ENCODE measurements at regions of chr3 and their contacts with region 1.

Region 1: DNA sequence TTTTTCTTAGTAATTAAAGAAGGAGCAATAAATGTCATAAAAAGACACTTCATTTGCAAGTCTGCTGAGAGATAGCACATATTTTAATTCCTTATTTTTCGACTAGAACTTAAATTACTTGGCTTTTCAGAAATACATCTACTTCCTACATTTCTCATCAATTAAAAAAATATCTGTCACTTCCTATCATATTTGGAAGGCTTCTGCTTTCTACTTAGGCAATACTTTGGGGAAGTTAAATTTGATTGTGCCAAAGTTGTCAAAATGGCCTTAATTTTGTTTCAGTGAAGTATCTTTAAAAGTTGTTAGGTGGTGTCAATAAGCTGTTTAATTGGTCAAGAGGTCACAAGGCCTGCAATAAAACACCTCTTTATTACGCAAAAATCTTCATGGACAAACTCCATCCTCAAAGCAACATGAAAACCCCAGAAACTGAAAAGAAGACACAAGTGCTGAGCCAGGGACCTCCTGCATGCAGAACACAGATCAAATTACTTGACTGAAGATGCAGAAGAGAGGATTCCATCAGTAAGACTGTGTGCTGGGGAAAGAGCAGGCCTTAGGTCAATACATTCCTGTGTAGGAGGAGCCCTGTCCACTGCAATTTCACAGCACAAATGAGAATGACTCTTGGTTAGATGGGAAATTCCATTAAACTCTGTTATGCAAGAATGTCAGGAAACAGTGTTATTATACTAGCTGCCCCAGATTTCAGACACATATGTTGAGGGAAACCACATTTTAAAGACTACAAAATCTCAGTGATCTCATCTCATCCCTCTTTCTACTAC is 48.0 kb upstream of the FSTL1 start:
- DNase-seq: no peak

Region 2: DNA sequence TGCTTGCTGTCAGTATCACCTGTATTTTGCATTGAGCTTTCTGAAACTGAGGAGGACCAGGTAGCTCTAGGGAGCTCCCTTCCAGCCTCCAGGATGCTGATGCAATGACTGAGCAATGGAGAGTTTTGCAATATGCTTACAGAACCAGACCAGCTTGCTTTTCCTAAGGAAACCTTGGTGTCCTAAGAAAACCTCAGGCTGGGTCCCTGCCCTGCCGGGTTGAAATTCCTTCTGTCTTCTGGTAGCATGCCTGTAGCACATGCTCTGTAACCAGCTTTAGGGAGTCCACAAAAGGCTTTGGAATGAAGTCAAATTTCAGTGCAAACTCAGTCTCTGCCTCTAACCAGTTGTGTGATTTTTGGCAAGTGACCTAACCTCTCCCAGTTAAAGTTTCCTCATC is 338.7 kb before region 1 on chr3:
- intact Hi-C with region 1: no loop called
- DNase-seq: no peak

Region 3: DNA sequence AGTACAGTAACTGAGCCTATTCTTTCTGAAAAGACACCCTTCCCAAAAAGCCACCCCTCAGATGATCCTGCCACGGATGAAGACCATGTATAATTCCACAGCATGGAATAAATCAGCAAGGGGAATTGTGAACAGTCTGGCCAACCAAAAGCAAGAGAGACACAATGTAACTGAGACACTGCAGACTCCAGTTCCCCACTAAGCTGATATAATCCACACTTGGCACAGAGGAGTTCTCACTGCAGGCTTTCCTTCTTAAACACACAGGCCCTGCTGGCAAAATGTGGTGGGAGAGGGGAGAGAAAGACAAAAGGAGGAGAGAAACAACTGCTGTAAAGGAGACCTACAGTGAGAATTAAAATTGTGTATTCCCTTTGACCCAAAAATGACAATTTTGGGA is 226.5 kb before region 1 on chr3:
- intact Hi-C with region 1: no loop called
- DNase-seq: no peak

Region 4: GRCh38 chr3:120450600-120451271 is 48.0 kb before region 1 on chr3 and contains the start of gene FSTL1:
- intact Hi-C with region 1: loop called (anchors 5 kb)
- DNase-seq: peak; percentile 82
- total RNA-seq, gene FSTL1: 140 TPM

Region 5: DNA sequence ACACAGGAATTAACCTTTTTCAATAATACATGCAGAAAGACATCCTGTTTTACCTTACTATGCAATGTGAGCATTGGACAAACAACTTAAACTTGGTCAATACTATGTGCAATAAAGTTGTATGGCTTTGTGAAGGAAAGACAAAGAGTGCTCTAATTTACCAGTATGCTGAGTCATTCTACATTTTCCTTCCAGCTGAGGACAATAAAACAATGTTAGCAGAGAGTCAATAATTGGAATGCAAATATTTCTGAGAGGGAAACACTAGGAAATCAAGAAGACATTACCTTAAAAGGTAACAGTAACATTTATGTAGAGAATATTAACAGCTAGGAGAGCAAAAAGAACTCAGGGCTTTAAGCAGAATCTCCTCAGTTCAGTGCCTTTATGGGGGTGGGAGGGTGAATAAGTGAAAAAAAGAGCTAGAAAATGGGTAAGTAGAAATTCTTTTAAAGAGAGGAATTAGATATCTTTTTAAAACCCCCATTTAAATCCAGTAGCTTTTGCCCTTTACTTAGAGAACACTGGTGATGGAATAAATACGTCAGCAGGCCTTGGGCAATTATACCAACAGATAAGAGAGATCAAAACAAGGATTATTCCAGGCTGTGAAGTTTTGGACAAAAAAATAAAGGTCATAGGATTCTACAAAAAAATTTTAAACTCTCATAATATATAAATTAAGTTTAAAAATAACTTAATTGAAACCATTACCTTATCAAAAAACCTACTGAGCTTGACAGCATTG is 194.9 kb after region 1 on chr3:
- intact Hi-C with region 1: no loop called
- DNase-seq: no peak

Measured in cardiac septum (tissue), 1 donor.